ENCODE measurements at regions of chr21 and their contacts with region 1.

Region 1: DNA sequence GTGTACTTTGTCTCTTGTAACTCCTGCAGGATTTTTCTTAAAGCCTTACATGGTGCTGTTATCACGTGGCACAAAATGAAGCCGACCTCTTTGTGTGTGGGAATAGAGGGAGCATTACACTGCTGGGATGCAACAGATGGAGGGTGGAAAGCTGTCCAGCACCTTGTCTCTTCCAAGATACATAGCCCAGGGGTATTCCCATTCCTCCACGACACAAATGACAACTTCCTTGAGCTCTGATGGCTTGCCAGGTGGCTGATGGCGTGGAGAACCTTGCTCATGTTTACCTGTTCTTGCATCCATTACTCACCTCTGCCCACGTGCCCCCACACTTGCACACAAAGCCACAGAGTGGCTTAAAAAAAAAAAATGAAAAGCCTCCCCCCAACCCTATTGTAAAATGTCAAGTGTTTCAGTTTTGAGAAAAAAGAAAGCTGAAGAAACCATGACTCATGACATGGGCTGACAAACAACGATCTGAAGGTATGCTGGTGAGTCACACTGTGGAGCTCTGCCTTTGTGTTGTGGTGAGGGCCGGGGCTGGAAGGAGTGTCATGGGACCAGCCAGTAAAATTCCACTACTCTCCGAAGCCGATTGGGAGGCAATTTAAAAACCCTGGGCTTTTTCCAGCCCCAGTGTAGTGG is 32.0 kb upstream of the ATP5PO start:
- DNase-seq: peak; percentile 78 to 95 (median 90)
- H3K4me3 ChIP-seq: peak overlapping the region; percentile 49
- H3K4me3 Mint-ChIP-seq: peak overlapping the region; percentile 61 to 75 (median 71)
- H3K27ac ChIP-seq: peak overlapping the region; percentile 100
- H3K27ac Mint-ChIP-seq: peak overlapping the region; percentile 95 to 99 (median 98)
- H3K4me1 ChIP-seq: peaks cover 74% of the 10 kb centered on the region
- H3K4me1 Mint-ChIP-seq: peaks cover 76 to 93% (median 83%) of the 10 kb centered on the region in 3 donors
- H3K27me3 ChIP-seq: no peaks in the 10 kb centered on the region
- H3K27me3 Mint-ChIP-seq: peaks cover 0 to 5% of the 10 kb centered on the region in 2 donors

Region 2: GRCh38 chr21:33901412-33902288 is 45.9 kb before region 1 on chr21:
- CTCF ChIA-PET with region 1: no interaction called
- POLR2A ChIA-PET with region 1: no interaction called
- DNase-seq: no peak
- H3K4me3 ChIP-seq: no peak overlapping the region
- H3K4me3 Mint-ChIP-seq: no peak overlapping the region
- H3K27ac ChIP-seq: no peak overlapping the region
- H3K27ac Mint-ChIP-seq: peak overlapping the region in 2 of 8 donors; percentile 40 to 71
- H3K4me1 ChIP-seq: no peaks in the 10 kb centered on the region
- H3K4me1 Mint-ChIP-seq: no peaks in the 10 kb centered on the region
- H3K27me3 ChIP-seq: no peaks in the 10 kb centered on the region
- H3K27me3 Mint-ChIP-seq: peaks cover 0 to 1% of the 10 kb centered on the region in 2 donors

Region 3: GRCh38 chr21:33931799-33932390 is 15.7 kb before region 1 on chr21:
- CTCF ChIA-PET with region 1: interaction called, 104 read pairs
- POLR2A ChIA-PET with region 1: interaction called, 174 read pairs
- DNase-seq: peak in 1 of 5 donors; percentile 56
- H3K4me3 ChIP-seq: peak overlapping the region; percentile 83
- H3K4me3 Mint-ChIP-seq: peak overlapping the region; percentile 91 to 100 (median 96)
- H3K27ac ChIP-seq: peak overlapping the region; percentile 98
- H3K27ac Mint-ChIP-seq: peak overlapping the region; percentile 96 to 100 (median 99)
- H3K4me1 ChIP-seq: peaks cover 49% of the 10 kb centered on the region
- H3K4me1 Mint-ChIP-seq: peaks cover 38 to 46% (median 41%) of the 10 kb centered on the region in 3 donors
- H3K27me3 ChIP-seq: no peaks in the 10 kb centered on the region
- H3K27me3 Mint-ChIP-seq: peaks cover 0 to 1% of the 10 kb centered on the region in 2 donors

Region 4: GRCh38 chr21:33961061-33961460 is 13.5 kb after region 1 on chr21:
- CTCF ChIA-PET with region 1: interaction called, 5 read pairs
- POLR2A ChIA-PET with region 1: interaction called, 15 read pairs
- DNase-seq: no peak
- H3K4me3 ChIP-seq: no peak overlapping the region
- H3K4me3 Mint-ChIP-seq: no peak overlapping the region
- H3K27ac ChIP-seq: no peak overlapping the region
- H3K27ac Mint-ChIP-seq: peak overlapping the region in 1 of 8 donors; percentile 66
- H3K4me1 ChIP-seq: peaks cover 12% of the 10 kb centered on the region
- H3K4me1 Mint-ChIP-seq: peaks cover 29 to 65% (median 58%) of the 10 kb centered on the region in 3 donors
- H3K27me3 ChIP-seq: no peaks in the 10 kb centered on the region
- H3K27me3 Mint-ChIP-seq: no peaks in the 10 kb centered on the region

Region 5: DNA sequence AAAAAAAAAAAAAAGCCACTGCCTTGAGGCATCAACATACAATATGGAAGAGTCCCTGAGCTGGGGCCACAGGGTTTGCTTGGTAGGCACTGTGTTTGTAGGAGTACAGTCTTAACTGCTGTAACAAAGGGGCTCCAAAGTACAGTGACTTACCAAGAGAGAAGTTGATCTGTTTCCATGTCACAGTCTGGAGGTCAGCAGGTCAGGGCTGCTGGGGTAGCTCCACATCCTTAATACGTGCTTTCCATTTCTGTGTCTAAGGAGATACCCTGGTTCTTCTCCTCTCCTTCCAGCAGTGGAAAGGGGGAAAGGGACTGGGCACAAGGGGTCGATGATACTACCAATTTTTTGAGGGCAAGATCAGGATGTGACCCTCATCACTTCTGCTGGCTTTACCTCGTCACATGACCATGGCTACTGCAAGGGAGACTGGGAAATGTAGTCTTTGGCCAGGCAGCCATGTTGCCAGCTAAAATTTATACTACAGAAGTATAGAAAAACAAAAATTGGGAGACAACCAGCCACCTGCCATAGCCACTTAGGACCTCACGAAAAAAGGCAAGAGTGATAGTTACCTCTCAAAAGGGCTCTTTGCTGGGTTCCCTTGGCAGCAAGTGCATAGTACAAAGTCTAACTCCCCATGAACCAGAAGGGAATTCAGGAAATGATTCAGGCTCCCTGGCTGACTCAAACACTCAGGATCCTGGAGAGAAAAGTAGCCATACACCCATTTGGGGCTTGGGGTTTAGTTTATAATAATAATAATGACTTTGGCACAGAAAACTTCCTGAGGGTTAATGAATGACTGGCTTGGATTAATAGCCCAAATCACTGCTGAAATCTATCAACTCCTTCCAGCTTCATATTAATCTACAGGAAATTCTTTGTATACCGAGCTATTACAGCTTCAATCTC is 20.8 kb after region 1 on chr21:
- CTCF ChIA-PET with region 1: interaction called, 6 read pairs
- POLR2A ChIA-PET with region 1: interaction called, 15 read pairs
- DNase-seq: peak in 1 of 5 donors; percentile 41
- H3K4me3 ChIP-seq: no peak overlapping the region
- H3K4me3 Mint-ChIP-seq: no peak overlapping the region
- H3K27ac ChIP-seq: no peak overlapping the region
- H3K27ac Mint-ChIP-seq: peak overlapping the region in 7 of 8 donors; percentile 59 to 87 (median 74)
- H3K4me1 ChIP-seq: no peaks in the 10 kb centered on the region
- H3K4me1 Mint-ChIP-seq: peaks cover 16 to 55% (median 47%) of the 10 kb centered on the region in 3 donors
- H3K27me3 ChIP-seq: no peaks in the 10 kb centered on the region
- H3K27me3 Mint-ChIP-seq: no peaks in the 10 kb centered on the region

Region 6: DNA sequence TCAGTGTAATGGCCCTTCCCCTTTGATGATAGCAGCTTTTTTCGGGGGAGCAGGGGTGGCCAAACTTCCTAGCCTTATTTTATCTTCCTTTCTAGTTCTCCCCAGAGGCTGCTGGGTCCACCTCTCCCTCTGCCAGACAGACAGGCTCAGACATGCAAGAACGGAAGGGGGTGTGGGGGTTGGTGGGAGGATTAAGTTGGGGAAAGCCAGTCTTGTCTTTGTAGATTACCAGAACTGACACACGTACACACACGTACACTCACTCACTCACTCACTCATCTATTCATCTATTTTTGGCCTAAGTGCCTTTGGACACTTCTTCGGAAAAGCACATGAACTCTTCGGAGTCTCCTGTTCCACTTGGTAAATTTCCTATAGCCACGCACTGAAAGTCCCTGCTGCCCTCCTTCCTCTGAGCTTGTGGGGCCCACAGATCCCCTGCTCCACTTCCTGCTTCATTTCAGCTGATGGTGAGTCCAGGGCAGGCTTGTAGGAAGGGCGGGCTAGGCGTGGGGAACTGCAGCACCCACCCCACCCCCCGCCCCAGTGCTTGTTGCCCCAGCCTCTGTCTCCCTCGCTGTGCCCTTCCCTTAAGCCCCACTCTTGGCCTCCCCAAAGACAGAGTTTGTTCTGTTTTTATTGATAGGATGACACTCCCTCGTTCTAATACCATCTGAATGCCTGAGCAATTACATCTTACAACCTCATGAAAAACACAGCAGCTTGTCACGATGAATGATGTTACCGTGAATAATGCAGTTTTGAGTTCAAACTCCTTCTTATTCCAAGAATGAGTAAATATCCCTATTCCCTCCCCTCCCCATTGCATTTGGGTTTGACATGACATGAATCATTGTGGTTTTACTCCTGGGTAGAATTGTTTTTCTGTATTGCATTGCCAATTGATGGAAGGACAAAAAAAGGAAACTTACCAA is 28.8 kb after region 1 on chr21:
- CTCF ChIA-PET with region 1: interaction called, 16 read pairs
- POLR2A ChIA-PET with region 1: interaction called, 39 read pairs
- DNase-seq: peak; percentile 16 to 76 (median 44)
- H3K4me3 ChIP-seq: peak overlapping the region; percentile 23
- H3K4me3 Mint-ChIP-seq: peak overlapping the region; percentile 0 to 80 (median 75)
- H3K27ac ChIP-seq: peak overlapping the region; percentile 83
- H3K27ac Mint-ChIP-seq: peak overlapping the region; percentile 88 to 98 (median 93)
- H3K4me1 ChIP-seq: peaks cover 32% of the 10 kb centered on the region
- H3K4me1 Mint-ChIP-seq: peaks cover 49 to 70% (median 58%) of the 10 kb centered on the region in 3 donors
- H3K27me3 ChIP-seq: no peaks in the 10 kb centered on the region
- H3K27me3 Mint-ChIP-seq: no peaks in the 10 kb centered on the region

Region 7: GRCh38 chr21:34073032-34073869 is 125.7 kb after region 1 on chr21 and contains the starts of genes MRPS6 and SLC5A3:
- CTCF ChIA-PET with region 1: interaction called, 6 read pairs
- POLR2A ChIA-PET with region 1: interaction called, 30 read pairs
- DNase-seq: peak; percentile 63 to 76 (median 71)
- H3K4me3 ChIP-seq: peak within 1 kb of the TSS; percentile 61
- H3K4me3 Mint-ChIP-seq: peak within 1 kb of the TSS; percentile 91 to 97 (median 95)
- H3K27ac ChIP-seq: peak within 1 kb of the TSS; percentile 63
- H3K27ac Mint-ChIP-seq: peak within 1 kb of the TSS; percentile 64 to 97 (median 92)
- H3K4me1 ChIP-seq: peaks cover 38% of the 10 kb centered on the region
- H3K4me1 Mint-ChIP-seq: peaks cover 6 to 47% (median 44%) of the 10 kb centered on the region in 3 donors
- H3K27me3 ChIP-seq: no peaks in the 10 kb centered on the region
- H3K27me3 Mint-ChIP-seq: peaks cover 0 to 5% of the 10 kb centered on the region in 2 donors
- total RNA-seq, gene MRPS6: 134 to 136 TPM
- total RNA-seq, gene SLC5A3: 23.2 to 23.8 TPM

Region 8: GRCh38 chr21:34351786-34352241 is 404.2 kb after region 1 on chr21:
- CTCF ChIA-PET with region 1: interaction called, 11 read pairs
- POLR2A ChIA-PET with region 1: no interaction called
- DNase-seq: peak in 1 of 5 donors; percentile 10
- H3K4me3 ChIP-seq: no peak overlapping the region
- H3K4me3 Mint-ChIP-seq: no peak overlapping the region
- H3K27ac ChIP-seq: no peak overlapping the region
- H3K27ac Mint-ChIP-seq: no peak overlapping the region
- H3K4me1 ChIP-seq: no peaks in the 10 kb centered on the region
- H3K4me1 Mint-ChIP-seq: peaks cover 4 to 6% (median 5%) of the 10 kb centered on the region in 3 donors
- H3K27me3 ChIP-seq: no peaks in the 10 kb centered on the region
- H3K27me3 Mint-ChIP-seq: peaks cover 25 to 26% of the 10 kb centered on the region in 2 donors

Measured in CD8-positive, alpha-beta memory T cell (primary cell).